ENCODE measurements at regions of chr11 and their contacts with region 1.

Region 1: DNA sequence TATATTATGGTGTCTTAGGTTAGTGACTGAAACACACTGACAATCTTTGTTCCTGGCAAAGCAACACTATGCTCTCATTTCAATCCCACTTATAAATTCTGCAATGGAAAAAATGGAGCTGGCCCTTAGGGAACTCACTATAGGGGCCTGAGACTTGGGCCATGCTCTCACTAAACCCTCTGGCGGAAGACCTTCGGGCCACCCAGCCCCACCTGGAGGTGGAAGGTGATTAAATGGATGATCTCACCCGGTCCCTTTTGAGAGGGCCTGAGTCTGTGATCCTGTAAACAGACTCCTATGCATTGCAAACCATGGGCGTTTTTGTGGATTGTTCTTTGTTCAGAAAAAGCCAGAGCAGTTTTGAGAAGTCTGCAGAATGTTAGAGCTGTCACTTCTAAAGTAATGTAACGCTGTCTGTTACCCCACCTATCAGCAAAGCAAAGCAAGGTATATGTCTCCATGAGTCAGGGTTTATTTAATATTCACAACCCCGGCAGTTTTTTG is 17.0 kb upstream of the CDON start:
- DNase-seq: peak in 1 of 4 donors; percentile 25
- ATAC-seq: peak; percentile 47
- H3K4me3 ChIP-seq: no peak overlapping the region
- H3K27ac ChIP-seq: peak overlapping the region; percentile 63 to 70 (median 66)
- H3K4me1 ChIP-seq: peaks cover 26% of the 10 kb centered on the region
- H3K27me3 ChIP-seq: no peaks in the 10 kb centered on the region
- CTCF ChIP-seq: peak in 1 of 7 experiments; percentile 2
- POLR2A ChIP-seq: no peak

Region 2: DNA sequence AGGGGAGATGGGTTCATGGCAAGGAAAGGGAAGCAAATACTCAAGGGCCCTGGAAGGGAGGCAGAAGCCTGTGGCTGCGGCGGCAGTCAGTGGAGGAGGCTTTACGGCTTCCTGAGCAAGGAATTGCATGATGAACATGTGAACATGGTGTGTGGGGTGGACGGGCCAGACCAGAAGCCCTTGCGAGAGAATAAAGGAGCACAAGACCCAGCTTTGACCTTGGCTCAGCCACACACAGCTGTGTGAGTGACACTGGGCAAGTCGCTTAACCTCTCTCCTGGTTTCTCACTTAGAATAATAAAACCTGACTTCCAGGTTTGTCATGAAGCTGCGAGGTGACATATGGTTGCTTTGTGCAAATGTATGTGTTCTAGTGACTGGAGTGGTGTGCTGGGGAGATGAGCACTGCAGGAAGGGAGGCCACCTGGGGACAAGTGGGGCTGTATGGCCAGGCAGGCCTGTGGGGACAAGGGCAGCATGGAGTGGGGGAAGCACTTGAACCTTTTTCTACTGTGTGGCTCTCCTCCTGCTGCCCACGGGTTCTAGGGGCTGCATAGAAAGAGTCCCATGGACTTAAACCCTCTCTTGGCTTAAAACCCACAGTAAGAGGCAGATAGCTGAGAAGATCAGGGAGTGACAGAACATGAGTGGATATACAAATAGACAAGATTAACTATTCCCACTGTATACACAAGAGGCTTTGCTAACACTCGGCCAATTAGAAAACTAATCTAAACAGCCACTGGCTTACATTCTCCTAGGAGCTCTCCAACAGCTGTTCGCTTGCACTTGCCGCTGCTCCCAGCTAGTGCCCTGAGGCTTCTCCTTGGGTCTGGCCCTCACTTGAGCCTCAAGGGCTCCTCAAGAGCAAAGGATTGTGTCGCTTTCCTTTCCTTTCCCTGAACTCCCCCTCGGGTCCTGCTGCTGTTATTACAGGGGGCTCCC is 50.3 kb after region 1 on chr11:
- intact Hi-C with region 1: loop called (anchors 10 kb)
- DNase-seq: no peak
- ATAC-seq: no peak
- H3K4me3 ChIP-seq: no peak overlapping the region
- H3K27ac ChIP-seq: no peak overlapping the region
- H3K4me1 ChIP-seq: peaks cover 21% of the 10 kb centered on the region
- H3K27me3 ChIP-seq: no peaks in the 10 kb centered on the region
- CTCF ChIP-seq: no peak
- POLR2A ChIP-seq: no peak